Endothelial cell of umbilical vein (primary cell): ENCODE measurements at regions of chr20 and their contacts with region 1.

Region 1: GRCh38 chr20:21339499-21339898 is 36.4 kb downstream of the XRN2 start:
- DNase-seq: no peak
- H3K4me3 ChIP-seq: no peak overlapping the region
- H3K27ac ChIP-seq: no peak overlapping the region
- H3K4me1 ChIP-seq: peaks cover 17% of the 10 kb centered on the region
- H3K27me3 ChIP-seq: no peaks in the 10 kb centered on the region
- CTCF ChIP-seq: no peak
- POLR2A ChIP-seq: no peak

Region 2: DNA sequence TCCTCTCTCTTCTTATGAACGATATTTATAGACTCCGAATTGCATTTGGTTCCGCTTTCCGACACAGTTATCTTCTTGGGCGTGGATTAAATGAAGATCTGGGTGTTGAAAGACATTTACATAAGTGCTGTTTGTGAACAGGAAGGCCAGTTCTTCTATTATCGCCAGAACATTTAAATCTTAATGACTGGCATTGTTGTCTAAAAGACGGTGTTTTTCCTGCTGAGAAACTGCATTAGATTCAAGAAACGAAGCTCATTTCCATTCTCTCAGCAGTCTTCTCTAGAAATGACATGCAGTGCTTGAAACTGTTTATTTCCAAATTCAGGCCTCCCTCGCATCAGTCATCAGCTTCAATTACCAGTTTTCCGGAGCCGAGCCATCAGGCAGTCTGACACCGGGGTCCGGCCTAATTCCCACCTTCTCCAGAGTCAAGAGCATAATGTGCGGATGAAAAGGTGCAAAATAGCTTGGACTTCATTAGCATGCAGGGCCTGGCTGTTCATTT is 249.3 kb before region 1 on chr20:
- CTCF ChIA-PET with region 1: no interaction called
- POLR2A ChIA-PET with region 1: no interaction called
- dilution Hi-C with region 1: no loop called
- intact Hi-C with region 1: no loop called
- DNase-seq: no peak
- H3K4me3 ChIP-seq: no peak overlapping the region
- H3K27ac ChIP-seq: no peak overlapping the region
- H3K4me1 ChIP-seq: no peaks in the 10 kb centered on the region
- H3K27me3 ChIP-seq: peaks cover 29 to 36% of the 10 kb centered on the region in 2 experiments
- CTCF ChIP-seq: no peak
- POLR2A ChIP-seq: no peak

Region 3: GRCh38 chr20:21309678-21310467 is 29.6 kb before region 1 on chr20:
- CTCF ChIA-PET with region 1: no interaction called
- POLR2A ChIA-PET with region 1: no interaction called
- dilution Hi-C with region 1: no loop called
- intact Hi-C with region 1: no loop called
- DNase-seq: peak; percentile 38
- H3K4me3 ChIP-seq: no peak overlapping the region
- H3K27ac ChIP-seq: no peak overlapping the region
- H3K4me1 ChIP-seq: peaks cover 13% of the 10 kb centered on the region
- H3K27me3 ChIP-seq: no peaks in the 10 kb centered on the region
- CTCF ChIP-seq: no peak
- POLR2A ChIP-seq: no peak

Region 4: GRCh38 chr20:21323640-21324039 is 15.9 kb before region 1 on chr20:
- CTCF ChIA-PET with region 1: interaction called, 5 read pairs
- POLR2A ChIA-PET with region 1: no interaction called
- dilution Hi-C with region 1: no loop called
- intact Hi-C with region 1: loop called (anchors 2 kb)
- DNase-seq: peak; percentile 89
- H3K4me3 ChIP-seq: no peak overlapping the region
- H3K27ac ChIP-seq: peak overlapping the region; percentile 32
- H3K4me1 ChIP-seq: peaks cover 34% of the 10 kb centered on the region
- H3K27me3 ChIP-seq: no peaks in the 10 kb centered on the region
- CTCF ChIP-seq: no peak
- POLR2A ChIP-seq: no peak

Region 5: GRCh38 chr20:21357844-21358243 is 18.3 kb after region 1 on chr20:
- CTCF ChIA-PET with region 1: interaction called, 10 read pairs
- POLR2A ChIA-PET with region 1: no interaction called
- dilution Hi-C with region 1: no loop called
- intact Hi-C with region 1: no loop called
- DNase-seq: peak; percentile 20
- H3K4me3 ChIP-seq: no peak overlapping the region
- H3K27ac ChIP-seq: no peak overlapping the region
- H3K4me1 ChIP-seq: peaks cover 21% of the 10 kb centered on the region
- H3K27me3 ChIP-seq: no peaks in the 10 kb centered on the region
- CTCF ChIP-seq: no peak
- POLR2A ChIP-seq: no peak